ENCODE measurements at regions of chr5 and their contacts with region 1.

Region 1: DNA sequence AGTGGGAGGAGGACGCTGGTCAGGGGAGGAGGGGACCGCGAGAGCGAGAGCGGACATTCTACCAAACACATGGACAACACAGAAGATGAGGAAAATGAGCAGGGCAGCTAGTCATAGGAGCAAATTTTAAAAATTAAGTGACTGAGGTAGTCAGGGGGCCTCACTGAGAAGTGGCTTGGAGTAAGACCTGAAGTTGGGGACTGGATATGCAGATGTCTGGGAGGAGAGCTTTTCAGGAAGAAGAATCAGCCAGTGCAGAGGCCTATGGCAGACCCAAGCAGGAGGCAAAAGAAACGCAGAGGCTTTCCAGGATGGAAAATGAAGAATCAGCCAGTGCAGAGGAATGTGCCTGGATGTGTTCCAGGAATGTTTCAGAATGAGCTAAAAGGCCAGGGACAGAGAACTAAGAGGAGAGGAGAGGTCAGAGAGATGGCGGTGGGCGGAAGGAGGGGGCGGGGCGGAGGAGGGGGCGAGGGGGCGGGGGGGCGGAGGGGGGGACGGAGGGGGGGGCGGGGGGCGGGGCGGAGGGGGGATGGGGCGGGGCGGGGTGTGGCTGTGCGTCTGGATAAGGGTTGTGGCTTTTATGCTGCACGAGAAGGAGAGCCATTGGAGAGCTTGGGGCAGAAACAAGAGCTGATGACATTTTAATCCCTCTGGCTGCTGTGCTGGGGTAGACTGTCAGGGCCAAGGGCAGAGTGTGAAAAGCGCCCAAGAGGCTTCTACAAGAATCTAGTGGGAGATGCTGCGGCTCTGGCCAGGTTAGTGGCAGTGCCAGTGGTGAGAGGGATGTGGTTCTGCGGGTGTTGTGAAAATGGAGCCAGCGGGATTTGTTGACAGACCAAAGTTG is 129.6 kb downstream of the KCNIP1 start:
- DNase-seq: peak; percentile 83
- H3K4me3 ChIP-seq: peak overlapping the region in 2 of 3 experiments; percentile 23 to 49
- H3K27ac ChIP-seq: peak overlapping the region; percentile 64
- H3K4me1 ChIP-seq: peaks cover 9% of the 10 kb centered on the region
- H3K27me3 ChIP-seq: peaks cover 0 to 4% of the 10 kb centered on the region in 2 experiments
- CTCF ChIP-seq: no peak
- POLR2A ChIP-seq: peak; percentile 30

Region 2: DNA sequence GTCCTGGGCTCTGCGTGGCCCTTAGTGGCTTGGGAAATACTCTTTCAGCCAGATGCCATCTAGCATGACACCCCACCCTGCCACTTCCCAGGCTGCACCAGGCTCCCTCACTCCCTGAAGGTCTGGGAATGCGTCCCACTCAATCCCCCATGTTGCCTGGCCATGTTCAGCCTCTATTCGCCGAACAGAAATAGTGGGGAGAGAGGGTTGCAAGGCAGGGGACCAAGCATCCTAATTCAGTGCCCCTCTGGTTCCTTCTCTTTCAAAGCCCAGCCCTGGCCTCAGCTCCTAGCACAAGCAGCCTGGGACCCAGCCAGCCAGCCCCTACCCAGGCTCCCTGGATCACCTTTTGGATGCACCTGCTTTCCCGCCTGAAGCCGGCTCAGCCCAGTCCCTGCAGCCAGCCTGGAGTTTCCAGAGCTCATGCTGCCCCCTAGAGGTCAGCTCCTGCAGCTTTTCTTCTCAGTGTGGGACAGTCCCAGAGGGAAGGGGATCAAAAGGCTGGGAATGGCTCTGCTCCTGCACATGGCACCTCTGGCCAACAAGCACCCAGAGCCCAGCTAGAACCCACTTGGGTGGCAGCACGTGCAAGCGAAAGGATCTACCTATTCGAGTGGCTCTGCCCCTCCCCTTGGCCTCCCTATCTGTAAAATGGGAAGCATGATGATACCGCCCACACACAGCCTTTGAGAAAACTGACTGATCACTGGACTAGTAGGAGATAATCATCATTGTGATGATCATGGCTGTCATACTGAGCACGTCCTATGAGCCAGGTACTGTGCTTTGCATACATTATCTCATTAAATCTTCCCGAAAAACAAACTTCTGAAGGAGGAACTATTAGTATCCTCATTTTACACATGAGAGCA is 449.4 kb before region 1 on chr5:
- CTCF ChIA-PET with region 1: no interaction called
- POLR2A ChIA-PET with region 1: no interaction called
- dilution Hi-C with region 1: no loop called
- intact Hi-C with region 1: no loop called
- DNase-seq: peak; percentile 65
- H3K4me3 ChIP-seq: no peak overlapping the region
- H3K27ac ChIP-seq: no peak overlapping the region
- H3K4me1 ChIP-seq: no peaks in the 10 kb centered on the region
- H3K27me3 ChIP-seq: no peaks in the 10 kb centered on the region
- CTCF ChIP-seq: peak; percentile 84 to 94
- POLR2A ChIP-seq: no peak

Region 3: GRCh38 chr5:170267431-170268152 is 365.9 kb before region 1 on chr5:
- CTCF ChIA-PET with region 1: interaction called, 9 read pairs
- POLR2A ChIA-PET with region 1: no interaction called
- dilution Hi-C with region 1: no loop called
- intact Hi-C with region 1: loop called (anchors 1 kb)
- DNase-seq: peak; percentile 75
- H3K4me3 ChIP-seq: no peak overlapping the region
- H3K27ac ChIP-seq: no peak overlapping the region
- H3K4me1 ChIP-seq: no peaks in the 10 kb centered on the region
- H3K27me3 ChIP-seq: peaks cover 17 to 35% of the 10 kb centered on the region in 2 experiments
- CTCF ChIP-seq: peak; percentile 81 to 83
- POLR2A ChIP-seq: no peak

Region 4: DNA sequence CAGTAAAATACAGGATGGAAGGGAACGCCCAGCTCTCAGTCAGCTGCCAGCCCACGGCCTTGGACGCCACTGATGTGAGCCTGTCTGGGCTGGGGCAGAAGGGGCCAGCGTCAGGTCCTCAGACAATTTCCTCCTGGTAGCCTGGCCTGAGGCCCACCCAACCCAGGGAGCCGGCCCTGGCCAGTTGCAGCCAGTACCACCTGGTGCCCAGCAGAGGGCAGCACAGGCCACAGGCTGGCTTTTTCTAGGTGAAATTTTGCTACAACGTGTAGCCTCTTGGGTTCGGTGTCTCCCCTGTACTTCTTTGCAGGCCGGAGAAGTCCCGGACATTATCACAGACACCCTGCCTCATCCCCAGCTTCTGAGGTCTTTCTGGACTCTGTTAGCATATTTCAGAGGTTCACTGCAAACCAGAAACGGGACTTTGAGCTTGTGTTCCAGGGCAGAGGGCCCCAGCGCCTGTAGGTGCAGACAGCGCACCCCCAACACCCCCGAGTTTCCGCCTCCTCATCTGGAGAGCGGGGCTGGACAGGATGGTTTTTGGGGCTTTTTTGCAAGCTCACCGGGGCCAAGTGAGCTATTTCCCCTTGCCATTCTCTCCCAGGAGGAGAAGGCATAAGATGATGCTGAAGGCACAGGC is 198.4 kb before region 1 on chr5:
- CTCF ChIA-PET with region 1: interaction called, 288 read pairs
- POLR2A ChIA-PET with region 1: no interaction called
- dilution Hi-C with region 1: no loop called
- intact Hi-C with region 1: loop called (anchors 1 kb)
- DNase-seq: peak; percentile 52
- H3K4me3 ChIP-seq: no peak overlapping the region
- H3K27ac ChIP-seq: no peak overlapping the region
- H3K4me1 ChIP-seq: no peaks in the 10 kb centered on the region
- H3K27me3 ChIP-seq: peaks cover 4% of the 10 kb centered on the region in 2 experiments
- CTCF ChIP-seq: peak; percentile 94 to 98
- POLR2A ChIP-seq: no peak

Region 5: GRCh38 chr5:170491479-170491878 is 142.0 kb before region 1 on chr5:
- CTCF ChIA-PET with region 1: interaction called, 4 read pairs
- POLR2A ChIA-PET with region 1: no interaction called
- dilution Hi-C with region 1: no loop called
- intact Hi-C with region 1: loop called (anchors 1 kb)
- DNase-seq: peak; percentile 91
- H3K4me3 ChIP-seq: no peak overlapping the region
- H3K27ac ChIP-seq: peak overlapping the region; percentile 75
- H3K4me1 ChIP-seq: peaks cover 15% of the 10 kb centered on the region
- H3K27me3 ChIP-seq: no peaks in the 10 kb centered on the region
- CTCF ChIP-seq: no peak
- POLR2A ChIP-seq: peak; percentile 25

Region 6: GRCh38 chr5:170614720-170615119 is 18.7 kb before region 1 on chr5:
- CTCF ChIA-PET with region 1: interaction called, 24 read pairs
- POLR2A ChIA-PET with region 1: no interaction called
- dilution Hi-C with region 1: no loop called
- intact Hi-C with region 1: no loop called
- DNase-seq: no peak
- H3K4me3 ChIP-seq: no peak overlapping the region
- H3K27ac ChIP-seq: no peak overlapping the region
- H3K4me1 ChIP-seq: no peaks in the 10 kb centered on the region
- H3K27me3 ChIP-seq: peaks cover 2 to 5% of the 10 kb centered on the region in 2 experiments
- CTCF ChIP-seq: no peak
- POLR2A ChIP-seq: no peak